ENCODE measurements at regions of chr21 and their contacts with region 1.

Region 1: GRCh38 chr21:37366482-37367316 is at the start of gene DYRK1A:
- DNase-seq: peak; percentile 100
- H3K4me3 ChIP-seq: peak within 1 kb of the TSS; percentile 86 to 98 (median 96)
- H3K27ac ChIP-seq: peak within 1 kb of the TSS; percentile 99 to 100 (median 100)
- H3K4me1 ChIP-seq: peaks cover 0 to 43% (median 39%) of the 10 kb centered on the region in 4 donors
- H3K27me3 ChIP-seq: no peaks in the 10 kb centered on the region
- CTCF ChIP-seq: no peak
- EP300 ChIP-seq: peak; percentile 29 to 96 (median 76)
- POLR2A ChIP-seq: peak; percentile 45 to 47
- total RNA-seq, gene DYRK1A: 62.9 to 74.1 (median 69.5) TPM

Region 2: GRCh38 chr21:37153196-37153934 is 213.3 kb before region 1 on chr21:
- intact Hi-C with region 1: loop called (anchors 10 kb)
- DNase-seq: no peak
- H3K4me3 ChIP-seq: no peak overlapping the region
- H3K27ac ChIP-seq: peak overlapping the region in 3 of 4 donors; percentile 63 to 81 (median 71)
- H3K4me1 ChIP-seq: peaks cover 0 to 23% (median 20%) of the 10 kb centered on the region in 4 donors
- H3K27me3 ChIP-seq: no peaks in the 10 kb centered on the region
- CTCF ChIP-seq: no peak
- EP300 ChIP-seq: peak in 1 of 4 donors; percentile 27
- POLR2A ChIP-seq: no peak

Region 3: GRCh38 chr21:37267269-37268184 is 99.2 kb before region 1 on chr21 and contains the start of gene VPS26C:
- intact Hi-C with region 1: loop called (anchors 1 kb)
- DNase-seq: peak; percentile 99
- H3K4me3 ChIP-seq: peak within 1 kb of the TSS; percentile 79 to 98 (median 97)
- H3K27ac ChIP-seq: peak within 1 kb of the TSS; percentile 95 to 99 (median 98)
- H3K4me1 ChIP-seq: peaks cover 0 to 33% (median 28%) of the 10 kb centered on the region in 4 donors
- H3K27me3 ChIP-seq: no peaks in the 10 kb centered on the region
- CTCF ChIP-seq: no peak
- EP300 ChIP-seq: peak in 2 of 4 donors; percentile 51 to 84
- POLR2A ChIP-seq: peak; percentile 65 to 72
- total RNA-seq, gene VPS26C: 47.1 to 71.7 (median 55.8) TPM

Region 4: GRCh38 chr21:37348664-37349063 is 18.0 kb before region 1 on chr21:
- intact Hi-C with region 1: no loop called
- DNase-seq: no peak
- H3K4me3 ChIP-seq: no peak overlapping the region
- H3K27ac ChIP-seq: no peak overlapping the region
- H3K4me1 ChIP-seq: no peaks in the 10 kb centered on the region
- H3K27me3 ChIP-seq: peaks cover 0 to under 1% (median 0%) of the 10 kb centered on the region in 3 donors
- CTCF ChIP-seq: no peak
- EP300 ChIP-seq: no peak
- POLR2A ChIP-seq: no peak

Region 5: GRCh38 chr21:37407719-37408420 is 41.2 kb after region 1 on chr21:
- intact Hi-C with region 1: loop called (anchors 5 kb)
- DNase-seq: no peak
- H3K4me3 ChIP-seq: no peak overlapping the region
- H3K27ac ChIP-seq: no peak overlapping the region
- H3K4me1 ChIP-seq: peaks cover 0 to 83% (median 62%) of the 10 kb centered on the region in 4 donors
- H3K27me3 ChIP-seq: no peaks in the 10 kb centered on the region
- CTCF ChIP-seq: no peak
- EP300 ChIP-seq: no peak
- POLR2A ChIP-seq: no peak

Region 6: DNA sequence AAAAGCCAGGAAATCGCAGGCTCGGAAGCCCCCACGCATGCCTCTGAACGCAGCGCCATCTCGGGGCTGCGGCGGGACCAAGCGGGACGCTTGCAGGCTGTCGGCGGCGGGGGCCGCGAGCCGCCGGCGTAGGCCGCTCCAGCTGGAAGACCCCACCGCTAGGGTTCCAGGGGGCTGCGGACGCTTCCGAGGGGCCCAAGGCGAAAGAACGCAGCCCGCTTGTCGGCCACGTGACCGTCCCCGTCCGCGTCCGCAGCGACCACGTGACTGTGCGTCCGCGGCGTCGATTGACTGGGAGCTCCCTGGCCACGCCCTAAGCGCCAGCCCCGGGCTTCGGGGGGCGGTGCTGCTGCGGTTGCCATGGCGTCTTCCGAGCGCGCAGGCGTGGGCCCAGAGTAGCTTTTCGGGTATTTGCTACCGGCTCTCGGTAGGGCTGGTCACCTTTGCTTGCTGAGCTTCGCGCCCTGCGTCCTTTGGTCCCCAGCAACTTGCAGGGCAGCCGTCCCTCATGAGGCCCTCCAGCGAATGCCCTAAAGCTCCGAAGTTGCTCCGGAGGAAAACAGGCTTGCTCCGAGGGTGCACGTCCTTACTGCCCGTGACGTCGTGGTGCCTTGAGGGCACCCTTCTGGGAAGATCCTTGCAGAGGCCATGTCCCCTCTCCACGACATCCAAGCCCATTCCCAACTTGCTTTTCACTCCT is 197.1 kb after region 1 on chr21:
- intact Hi-C with region 1: loop called (anchors 1 kb)
- DNase-seq: peak; percentile 96
- H3K4me3 ChIP-seq: peak overlapping the region; percentile 63 to 85 (median 74)
- H3K27ac ChIP-seq: peak overlapping the region; percentile 91 to 93 (median 92)
- H3K4me1 ChIP-seq: peaks cover 0 to 26% (median 17%) of the 10 kb centered on the region in 4 donors
- H3K27me3 ChIP-seq: no peaks in the 10 kb centered on the region
- CTCF ChIP-seq: peak in 3 of 4 experiments; percentile 8 to 43 (median 37)
- EP300 ChIP-seq: no peak
- POLR2A ChIP-seq: peak; percentile 18 to 21